ENCODE measurements at regions of chr11 and their contacts with region 1.

Region 1: DNA sequence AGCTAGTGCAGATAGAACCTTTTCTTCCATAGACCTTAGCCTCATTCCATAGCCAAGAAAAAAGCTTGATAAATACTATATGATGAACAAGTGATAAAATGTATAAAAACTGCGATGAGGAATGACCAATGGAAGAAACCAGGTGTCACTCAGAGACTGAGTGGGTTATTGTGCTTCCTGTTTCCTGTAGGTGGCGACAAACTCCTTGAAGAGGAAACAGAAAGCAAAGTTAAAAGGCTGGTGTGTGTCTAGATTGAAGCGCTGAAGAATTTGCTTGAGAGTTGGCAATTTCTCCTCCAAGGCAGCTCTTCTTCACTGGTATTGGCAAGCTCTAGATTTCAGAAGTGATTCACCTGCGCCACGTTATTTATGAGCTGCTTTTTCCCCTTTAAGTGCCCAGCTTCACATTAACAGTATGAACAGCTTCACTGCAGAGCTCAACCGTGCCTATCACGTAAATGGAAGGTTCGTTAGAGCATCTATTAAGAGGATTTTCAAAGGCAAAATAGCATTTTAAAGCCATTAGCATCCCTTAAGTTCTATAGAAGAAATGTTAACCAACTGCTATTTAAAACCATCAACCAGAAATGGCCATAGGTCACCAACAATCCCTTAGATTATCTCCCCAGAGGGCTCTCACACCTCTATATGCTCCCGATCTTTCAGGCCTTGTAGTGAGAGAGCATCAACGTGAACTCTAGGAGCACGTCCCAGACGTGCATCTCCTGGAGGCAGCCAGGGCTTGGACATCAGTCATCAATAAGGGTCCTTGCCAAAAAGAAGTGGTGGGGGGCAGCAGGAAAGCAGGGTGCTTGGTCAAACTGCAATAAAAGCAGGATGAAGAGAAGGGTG is 179.4 kb downstream of the CADM1 start:
- DNase-seq: no peak

Region 2: GRCh38 chr11:114987186-114987760 is 337.5 kb before region 1 on chr11:
- intact Hi-C with region 1: no loop called
- DNase-seq: no peak

Region 3: GRCh38 chr11:115060840-115061239 is 264.0 kb before region 1 on chr11:
- intact Hi-C with region 1: loop called in 1 of 2 experiments (anchors 5 kb)
- DNase-seq: no peak

Region 4: GRCh38 chr11:115290893-115291292 is 33.9 kb before region 1 on chr11:
- intact Hi-C with region 1: loop called in 1 of 2 experiments (anchors 1 kb)
- DNase-seq: no peak

Region 5: DNA sequence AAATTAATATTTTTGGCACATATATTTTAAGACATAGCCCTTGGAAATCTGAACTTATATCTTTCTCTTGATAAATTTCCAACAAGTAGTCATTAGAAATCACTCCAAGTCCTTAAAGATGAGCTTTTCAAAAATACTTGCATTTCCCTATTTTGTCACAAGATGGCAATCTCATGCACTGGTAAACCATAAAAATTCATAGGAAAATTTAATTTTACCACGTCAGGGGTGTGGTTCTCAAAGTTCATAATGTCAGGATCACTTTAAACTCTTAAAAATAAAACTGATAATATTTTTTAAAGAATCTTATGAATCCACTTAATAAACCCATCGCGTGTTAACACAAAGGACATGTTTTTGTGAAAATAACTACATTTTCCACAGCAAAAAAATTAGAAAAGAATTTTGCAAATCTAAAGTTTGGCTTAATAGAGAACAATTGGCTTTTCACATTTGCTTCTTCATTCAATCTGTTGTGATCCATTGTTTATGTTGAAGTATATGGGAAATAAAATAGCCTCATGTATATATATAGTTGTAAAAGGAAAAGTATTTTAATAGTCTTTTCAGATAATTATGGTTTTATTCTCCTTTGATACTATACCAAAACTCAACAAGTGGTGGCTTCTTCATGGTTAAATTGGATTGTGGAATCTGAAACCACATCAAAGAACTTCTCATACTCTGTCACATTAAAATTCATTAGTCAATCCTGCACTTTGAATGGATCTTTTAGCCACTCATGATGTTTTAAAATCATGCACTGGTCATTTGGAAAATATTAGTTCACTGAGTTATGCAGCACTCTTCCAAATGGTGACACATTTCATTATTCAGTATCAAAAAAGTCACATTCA is 10.4 kb after region 1 on chr11:
- intact Hi-C with region 1: no loop called
- DNase-seq: no peak

Region 6: DNA sequence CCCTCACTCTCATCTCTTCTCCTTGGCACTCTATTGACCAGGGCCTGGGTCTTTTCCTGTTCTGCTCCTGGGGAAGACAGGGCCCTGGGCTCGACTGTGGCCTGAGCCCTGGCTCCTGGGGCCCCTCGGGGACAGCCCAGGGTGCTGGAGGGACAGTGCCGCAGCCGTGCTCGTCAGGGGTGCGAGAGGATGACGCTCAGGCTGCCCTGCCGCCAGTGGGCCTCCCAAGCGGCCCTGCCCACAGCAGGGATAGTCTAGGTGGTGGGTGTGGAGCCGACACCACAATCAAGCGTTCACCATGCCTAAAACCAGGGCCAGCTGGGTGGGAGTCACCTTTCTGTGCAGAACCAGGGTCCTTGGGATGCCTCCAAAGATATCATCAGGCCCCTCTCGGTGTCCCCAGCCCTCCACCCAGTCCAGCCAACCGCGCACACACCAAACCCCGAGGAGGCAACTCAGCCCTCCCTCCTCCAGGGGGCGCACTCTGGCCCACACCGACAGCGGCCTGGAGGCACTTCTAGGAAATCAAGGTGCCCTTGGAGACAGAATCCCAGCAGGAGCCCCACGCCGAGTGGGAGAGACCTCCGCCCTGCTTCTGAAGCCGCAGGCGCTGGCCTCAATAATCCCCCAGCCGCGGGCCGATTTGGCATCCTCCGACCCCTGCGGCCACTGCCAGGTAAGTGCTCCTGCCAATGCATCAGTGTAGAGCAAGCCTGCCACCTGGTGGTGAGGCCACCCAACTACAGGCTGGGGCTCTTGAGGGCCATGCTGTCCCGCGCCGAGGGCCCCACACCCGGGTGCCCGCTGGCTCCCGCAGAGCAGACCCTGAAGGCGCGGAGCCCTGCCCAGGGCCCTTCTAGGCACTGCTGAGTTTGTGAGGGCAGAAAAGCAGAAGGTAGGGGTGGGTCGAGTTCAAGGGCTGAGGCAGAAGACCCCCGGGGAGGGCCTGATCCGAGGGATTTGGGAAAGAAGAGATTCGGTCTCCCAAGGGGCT is 951.5 kb after region 1 on chr11:
- intact Hi-C with region 1: loop called in 1 of 2 experiments (anchors 5 kb)
- DNase-seq: peak; percentile 89

Region 7: DNA sequence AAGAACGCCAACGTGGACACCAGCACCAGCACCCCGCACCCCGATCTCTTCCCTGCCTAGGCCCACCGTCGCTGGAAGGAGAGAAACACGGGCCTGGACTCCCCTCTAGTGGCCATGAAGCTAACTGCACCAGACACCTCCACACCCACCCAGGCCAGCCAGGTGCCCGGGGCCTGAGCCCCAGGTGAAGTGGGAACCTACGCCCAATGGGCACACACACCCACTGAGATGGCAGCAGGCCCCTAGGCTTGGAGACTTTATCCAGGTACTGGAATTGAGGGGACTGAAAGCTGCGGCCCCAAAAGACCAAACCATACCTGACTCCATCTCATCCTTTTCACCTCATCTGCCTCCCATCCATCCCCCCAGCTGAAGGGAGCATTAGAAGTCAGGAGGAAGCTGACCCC is 1367.0 kb after region 1 on chr11:
- intact Hi-C with region 1: loop called in 1 of 2 experiments (anchors 10 kb)
- DNase-seq: peak; percentile 82

Measured in posterior vena cava (tissue), 2 donors.